Thyroid gland (tissue), 4 donors: ENCODE measurements at regions of chr14 and their contacts with region 1.

Region 1: GRCh38 chr14:81269100-81269978 is 48.6 kb upstream of the GTF2A1 start:
- DNase-seq: no peak
- H3K4me3 ChIP-seq: no peak overlapping the region
- H3K27ac ChIP-seq: peak overlapping the region in 2 of 3 donors; percentile 14 to 46
- H3K4me1 ChIP-seq: peaks cover 21 to 22% of the 10 kb centered on the region in 2 donors
- H3K27me3 ChIP-seq: no peaks in the 10 kb centered on the region
- CTCF ChIP-seq: peak; percentile 55 to 95 (median 80)
- POLR2A ChIP-seq: no peak

Region 2: DNA sequence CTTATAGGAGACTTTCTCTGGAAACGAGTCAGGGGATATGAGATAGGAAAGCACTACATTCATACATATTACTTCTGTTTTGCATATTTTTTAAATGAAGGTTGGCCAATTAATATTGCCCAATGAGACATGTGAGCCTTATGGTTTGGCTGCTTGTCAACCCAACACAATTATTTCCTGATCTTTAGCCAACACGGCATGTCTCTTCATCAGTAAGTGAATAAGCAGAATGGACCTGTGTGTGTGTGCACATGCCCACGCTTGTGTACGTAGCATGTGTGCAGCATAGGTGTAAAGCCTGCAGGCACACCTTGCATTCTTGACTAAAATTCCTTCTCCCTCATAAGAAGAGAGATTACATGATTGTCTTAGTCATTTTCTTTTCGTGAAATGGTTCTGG is 42.4 kb after region 1 on chr14:
- intact Hi-C with region 1: loop called (anchors 5 kb)
- DNase-seq: no peak
- H3K4me3 ChIP-seq: no peak overlapping the region
- H3K27ac ChIP-seq: peak overlapping the region in 1 of 3 donors; percentile 41
- H3K4me1 ChIP-seq: peaks cover 28 to 41% of the 10 kb centered on the region in 2 donors
- H3K27me3 ChIP-seq: no peaks in the 10 kb centered on the region
- CTCF ChIP-seq: no peak
- POLR2A ChIP-seq: no peak

Region 3: DNA sequence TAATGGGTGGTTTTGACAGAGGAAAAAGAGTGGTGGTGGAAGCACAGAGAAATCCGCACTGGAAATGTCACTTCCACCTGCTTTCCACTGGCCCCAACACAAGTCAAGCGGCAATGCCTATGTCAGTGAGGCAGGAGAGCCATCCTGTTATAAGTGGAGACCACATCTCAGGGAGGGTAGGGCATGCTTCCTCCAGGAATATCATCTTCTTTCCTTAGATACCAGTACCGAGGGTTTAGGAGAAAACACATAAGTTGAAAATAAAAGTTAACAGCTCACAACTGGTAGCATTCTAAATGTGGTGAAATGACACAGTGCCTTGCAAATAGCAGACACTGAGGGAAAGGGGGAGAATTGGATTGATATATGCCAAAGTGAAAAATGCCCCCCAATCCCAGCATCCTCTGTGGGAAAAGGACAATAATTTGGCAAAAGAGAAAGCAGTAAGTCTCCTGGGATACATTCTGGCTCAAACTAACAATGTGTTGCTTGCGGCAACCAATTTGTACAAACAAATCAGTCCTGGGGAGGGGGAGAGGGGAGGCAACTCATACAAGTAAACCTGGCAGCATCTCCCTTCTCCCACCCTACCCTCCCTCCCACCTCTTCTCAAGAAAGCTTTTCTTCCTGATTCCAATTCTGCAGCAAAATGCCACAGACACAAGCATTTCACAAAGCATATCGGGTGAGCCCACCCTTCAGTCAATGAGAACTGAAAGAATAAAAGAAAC is 73.7 kb after region 1 on chr14:
- intact Hi-C with region 1: no loop called
- DNase-seq: no peak
- H3K4me3 ChIP-seq: no peak overlapping the region
- H3K27ac ChIP-seq: no peak overlapping the region
- H3K4me1 ChIP-seq: peaks cover 19 to 26% of the 10 kb centered on the region in 2 donors
- H3K27me3 ChIP-seq: no peaks in the 10 kb centered on the region
- CTCF ChIP-seq: no peak
- POLR2A ChIP-seq: no peak

Region 4: GRCh38 chr14:81453166-81453766 is 183.9 kb after region 1 on chr14:
- intact Hi-C with region 1: loop called (anchors 5 kb)
- DNase-seq: peak; percentile 54 to 67
- H3K4me3 ChIP-seq: no peak overlapping the region
- H3K27ac ChIP-seq: no peak overlapping the region
- H3K4me1 ChIP-seq: peaks cover 22 to 27% of the 10 kb centered on the region in 2 donors
- H3K27me3 ChIP-seq: no peaks in the 10 kb centered on the region
- CTCF ChIP-seq: peak; percentile 80 to 97 (median 92)
- POLR2A ChIP-seq: no peak

Region 5: DNA sequence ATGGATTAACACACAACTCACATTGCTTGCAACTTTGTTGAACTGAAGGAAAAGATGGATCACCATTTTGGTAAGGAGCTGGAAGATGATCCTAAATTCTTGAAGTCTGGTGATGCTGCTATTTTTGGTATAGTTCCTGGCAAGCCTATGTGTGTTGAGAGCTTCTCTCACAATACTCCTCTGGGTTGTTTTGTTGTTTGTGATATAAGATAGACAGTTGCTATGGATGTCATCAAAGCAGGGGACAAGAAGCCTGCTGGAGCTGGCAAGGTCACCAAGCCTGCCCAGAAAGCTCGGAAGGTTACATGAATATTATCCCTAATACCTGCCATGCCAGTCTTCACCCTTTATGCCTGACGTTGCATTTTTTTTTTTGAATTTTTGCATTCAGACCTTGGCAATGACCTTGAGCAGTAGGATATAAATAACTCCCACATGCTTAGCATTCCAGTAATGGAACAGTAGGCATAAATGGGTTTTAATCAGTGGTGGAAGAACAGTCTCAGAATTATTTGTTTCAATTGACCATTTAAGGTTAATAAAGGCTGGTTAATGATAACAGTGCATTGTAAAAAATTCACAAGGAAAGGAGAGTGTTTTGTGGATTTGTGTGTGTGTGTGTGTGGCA is 393.3 kb after region 1 on chr14:
- intact Hi-C with region 1: no loop called
- DNase-seq: no peak
- H3K4me3 ChIP-seq: no peak overlapping the region
- H3K27ac ChIP-seq: no peak overlapping the region
- H3K4me1 ChIP-seq: peaks cover 0 to 3% of the 10 kb centered on the region in 2 donors
- H3K27me3 ChIP-seq: no peaks in the 10 kb centered on the region
- CTCF ChIP-seq: no peak
- POLR2A ChIP-seq: no peak